GM10248 (cell line): ENCODE measurements at regions of chr5 and their contacts with region 1.

Region 1: GRCh38 chr5:103918668-103919367 is 356.2 kb upstream of the NUDT12 start:
- DNase-seq: no peak
- CTCF ChIP-seq: no peak

Region 2: GRCh38 chr5:103929338-103930003 is 10.7 kb after region 1 on chr5:
- CTCF ChIA-PET with region 1: interaction called, 16 read pairs
- POLR2A ChIA-PET with region 1: no interaction called
- DNase-seq: no peak
- CTCF ChIP-seq: no peak

Region 3: GRCh38 chr5:104126980-104127379 is 208.2 kb after region 1 on chr5:
- CTCF ChIA-PET with region 1: no interaction called
- POLR2A ChIA-PET with region 1: no interaction called
- DNase-seq: no peak
- CTCF ChIP-seq: no peak